Left ventricle myocardium inferior (tissue), 1 donor: ENCODE measurements at regions of chr1 and their contacts with region 1.

Region 1: DNA sequence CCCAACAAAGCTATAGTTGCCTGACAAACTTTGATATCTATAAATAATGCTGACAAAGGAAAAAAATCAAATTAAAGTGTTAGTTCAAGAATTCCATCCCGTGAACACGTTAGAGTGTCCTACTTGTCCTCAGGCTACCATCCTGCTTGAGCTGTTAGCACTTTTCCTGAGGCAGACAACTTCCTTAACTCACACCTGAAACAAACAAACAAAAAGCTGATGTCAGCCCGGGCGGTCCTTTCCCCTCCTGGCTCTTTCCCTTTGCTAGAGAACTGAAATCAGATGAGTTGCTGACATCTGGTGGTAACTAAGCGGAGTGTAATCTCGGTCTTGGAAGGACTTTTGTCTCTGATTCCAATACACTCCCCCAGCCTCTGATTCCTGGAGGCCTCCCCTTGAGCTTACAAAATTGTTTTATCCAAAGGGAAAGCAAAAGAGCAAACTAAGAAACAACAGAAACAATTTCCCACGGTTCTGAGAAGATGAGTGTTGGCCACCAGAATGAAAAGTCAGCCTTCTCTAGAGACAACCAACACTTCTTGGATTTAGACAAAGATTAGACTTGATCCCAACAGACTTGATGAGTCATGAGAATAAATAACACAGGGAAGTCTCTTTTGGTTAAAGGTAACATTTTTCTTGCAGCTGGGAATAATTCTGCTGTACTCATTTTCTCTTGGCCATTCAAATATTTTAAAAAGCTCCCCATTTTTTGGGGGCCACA is 135.4 kb downstream of the PROX1 start:
- DNase-seq: no peak
- H3K4me3 ChIP-seq: no peak overlapping the region
- H3K27ac ChIP-seq: no peak overlapping the region
- H3K4me1 ChIP-seq: no peaks in the 10 kb centered on the region
- H3K27me3 ChIP-seq: no peaks in the 10 kb centered on the region
- CTCF ChIP-seq: peak; percentile 70

Region 2: GRCh38 chr1:213244664-213245091 is 878.5 kb before region 1 on chr1:
- intact Hi-C with region 1: loop called (anchors 10 kb)
- DNase-seq: no peak
- H3K4me3 ChIP-seq: no peak overlapping the region
- H3K27ac ChIP-seq: no peak overlapping the region
- H3K4me1 ChIP-seq: peaks cover 5% of the 10 kb centered on the region
- H3K27me3 ChIP-seq: no peaks in the 10 kb centered on the region
- CTCF ChIP-seq: peak; percentile 84

Region 3: GRCh38 chr1:214192825-214193643 is 69.8 kb after region 1 on chr1:
- intact Hi-C with region 1: no loop called
- DNase-seq: no peak
- H3K4me3 ChIP-seq: no peak overlapping the region
- H3K27ac ChIP-seq: no peak overlapping the region
- H3K4me1 ChIP-seq: no peaks in the 10 kb centered on the region
- H3K27me3 ChIP-seq: peaks cover 81% of the 10 kb centered on the region
- CTCF ChIP-seq: no peak